ENCODE measurements at regions of chr9 and their contacts with region 1.

Region 1: GRCh38 chr9:69056191-69056815 is 20.8 kb downstream of the FXN start:
- DNase-seq: no peak
- H3K4me3 ChIP-seq: no peak overlapping the region
- H3K27ac ChIP-seq: no peak overlapping the region
- H3K27me3 ChIP-seq: no peaks in the 10 kb centered on the region
- CTCF ChIP-seq: no peak

Region 2: DNA sequence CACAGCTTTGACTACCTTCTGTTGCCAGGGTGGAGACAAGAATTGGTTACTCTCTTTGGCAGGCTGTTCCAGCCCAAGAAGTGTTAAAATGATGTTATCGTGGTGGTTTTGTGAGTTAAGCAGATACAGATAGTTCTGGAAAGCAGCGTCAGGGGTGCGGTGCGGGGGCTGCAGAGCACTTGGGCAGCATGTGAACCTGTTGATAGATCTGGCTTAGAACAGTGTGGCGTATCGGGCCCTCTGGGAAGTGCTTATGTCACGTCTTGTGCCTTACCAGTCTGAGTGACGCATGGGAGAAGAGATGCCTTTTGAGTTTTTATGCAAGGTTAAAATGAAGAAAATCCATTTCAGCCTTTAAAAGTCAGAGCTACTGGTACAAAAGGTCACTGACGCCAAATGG is 194.9 kb before region 1 on chr9:
- CTCF ChIA-PET with region 1: no interaction called
- POLR2A ChIA-PET with region 1: no interaction called
- DNase-seq: no peak
- H3K4me3 ChIP-seq: no peak overlapping the region
- H3K27ac ChIP-seq: no peak overlapping the region
- H3K27me3 ChIP-seq: peaks cover 6% of the 10 kb centered on the region
- CTCF ChIP-seq: no peak

Region 3: DNA sequence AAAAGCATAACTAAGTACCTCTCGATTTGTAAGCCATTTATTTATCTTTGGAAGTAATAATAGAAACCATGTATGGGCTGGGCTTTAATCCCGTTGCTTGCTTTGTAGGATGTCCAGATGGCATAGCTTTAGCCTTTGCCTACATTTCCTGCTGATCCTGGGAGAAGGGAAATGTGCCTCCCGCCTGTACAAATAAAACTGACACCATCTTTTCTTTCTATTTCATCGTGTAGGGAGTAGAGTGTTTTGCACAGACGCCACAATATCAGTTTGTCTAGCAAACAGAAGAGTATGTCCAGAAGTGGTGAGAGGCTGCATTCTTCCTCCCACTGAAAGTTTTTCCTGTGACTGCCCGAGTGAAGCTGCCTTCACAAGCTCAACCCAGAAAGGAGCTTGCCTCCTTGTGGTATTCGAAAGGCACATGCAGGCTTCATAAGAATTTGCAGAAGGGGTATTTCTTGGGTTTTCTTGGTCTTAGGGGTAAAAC is 93.1 kb after region 1 on chr9:
- CTCF ChIA-PET with region 1: interaction called, 23 read pairs
- POLR2A ChIA-PET with region 1: no interaction called
- DNase-seq: peak; percentile 65
- H3K4me3 ChIP-seq: peak overlapping the region; percentile 45
- H3K27ac ChIP-seq: peak overlapping the region; percentile 68
- H3K27me3 ChIP-seq: no peaks in the 10 kb centered on the region
- CTCF ChIP-seq: peak; percentile 69

Region 4: GRCh38 chr9:69155341-69156030 is 99.2 kb after region 1 on chr9:
- CTCF ChIA-PET with region 1: interaction called, 15 read pairs
- POLR2A ChIA-PET with region 1: no interaction called
- DNase-seq: no peak
- H3K4me3 ChIP-seq: no peak overlapping the region
- H3K27ac ChIP-seq: no peak overlapping the region
- H3K27me3 ChIP-seq: no peaks in the 10 kb centered on the region
- CTCF ChIP-seq: no peak

Region 5: GRCh38 chr9:69180670-69181069 is 124.4 kb after region 1 on chr9:
- CTCF ChIA-PET with region 1: interaction called, 10 read pairs
- POLR2A ChIA-PET with region 1: interaction called, 6 read pairs
- DNase-seq: peak; percentile 92
- H3K4me3 ChIP-seq: no peak overlapping the region
- H3K27ac ChIP-seq: peak overlapping the region; percentile 70
- H3K27me3 ChIP-seq: no peaks in the 10 kb centered on the region
- CTCF ChIP-seq: no peak

Region 6: DNA sequence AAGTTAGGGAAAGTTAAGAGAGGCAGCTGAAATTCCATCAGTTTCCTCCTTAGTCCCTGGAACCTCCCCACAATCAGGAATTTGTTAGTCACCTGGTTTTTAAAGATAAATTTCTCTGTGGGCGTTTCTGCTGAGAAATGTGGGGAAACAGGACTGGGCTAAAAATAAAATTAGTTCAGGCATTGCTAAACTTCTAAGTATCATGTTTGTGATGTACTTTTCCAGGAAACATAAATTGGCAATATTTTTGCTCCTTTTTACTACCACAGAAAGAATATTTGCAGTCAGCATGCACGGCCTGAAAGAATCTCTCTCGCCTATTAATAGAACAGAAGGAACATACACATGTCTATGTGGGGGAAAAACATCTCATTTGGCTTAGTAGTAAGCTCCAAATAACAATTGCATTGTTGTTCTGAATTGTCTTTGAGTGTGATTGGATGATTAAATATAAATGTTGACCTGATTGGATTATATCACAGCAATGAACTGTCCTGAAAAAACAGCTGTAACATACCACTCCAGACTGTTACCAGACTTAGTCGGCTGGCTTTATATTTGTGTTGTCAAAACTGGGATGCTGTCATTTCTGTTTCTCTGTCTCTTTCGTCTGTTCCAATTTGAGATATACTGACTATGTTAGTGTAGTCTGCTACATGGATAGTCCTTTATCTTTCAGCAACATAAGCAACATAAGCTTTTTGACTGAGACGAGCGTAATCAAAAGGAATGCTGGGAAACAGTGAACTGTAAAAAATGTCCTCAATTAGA is 130.7 kb after region 1 on chr9:
- CTCF ChIA-PET with region 1: interaction called, 324 read pairs
- POLR2A ChIA-PET with region 1: interaction called, 4 read pairs
- DNase-seq: no peak
- H3K4me3 ChIP-seq: no peak overlapping the region
- H3K27ac ChIP-seq: no peak overlapping the region
- H3K27me3 ChIP-seq: no peaks in the 10 kb centered on the region
- CTCF ChIP-seq: no peak

Region 7: DNA sequence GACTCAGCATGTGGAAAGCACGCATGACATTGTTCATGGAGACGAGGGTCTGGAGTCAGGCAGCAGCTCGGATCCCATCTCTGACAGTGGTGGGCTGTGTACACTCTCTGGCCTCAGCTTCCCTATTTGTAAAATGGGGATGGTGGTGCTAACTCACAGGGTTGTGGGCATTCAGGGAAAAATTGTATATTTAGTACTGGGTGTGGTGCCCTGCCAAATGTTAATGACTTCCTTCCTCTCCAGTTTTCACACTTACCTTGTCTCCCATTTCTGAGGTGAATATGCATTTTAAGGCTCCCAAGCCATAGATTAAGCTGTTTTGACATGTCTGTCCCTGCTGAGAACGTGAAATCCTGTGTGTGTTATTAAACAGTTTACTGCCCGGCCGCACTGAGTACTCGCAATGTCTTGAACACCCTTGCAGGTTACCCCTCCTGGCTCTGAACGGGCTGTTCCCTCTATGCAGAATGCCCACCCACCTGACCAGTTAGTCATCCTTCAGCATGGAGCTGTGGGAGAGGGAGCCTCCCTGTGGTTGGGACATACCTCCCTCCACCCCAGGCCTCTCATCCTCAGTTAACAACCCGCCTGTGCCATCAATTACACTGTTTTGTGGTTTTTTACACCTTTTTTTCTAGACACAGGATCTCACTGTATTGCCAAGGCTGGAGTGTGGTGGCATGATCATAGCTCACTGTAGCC is 143.6 kb after region 1 on chr9:
- CTCF ChIA-PET with region 1: interaction called, 324 read pairs
- POLR2A ChIA-PET with region 1: no interaction called
- DNase-seq: no peak
- H3K4me3 ChIP-seq: no peak overlapping the region
- H3K27ac ChIP-seq: no peak overlapping the region
- H3K27me3 ChIP-seq: no peaks in the 10 kb centered on the region
- CTCF ChIP-seq: no peak

Region 8: DNA sequence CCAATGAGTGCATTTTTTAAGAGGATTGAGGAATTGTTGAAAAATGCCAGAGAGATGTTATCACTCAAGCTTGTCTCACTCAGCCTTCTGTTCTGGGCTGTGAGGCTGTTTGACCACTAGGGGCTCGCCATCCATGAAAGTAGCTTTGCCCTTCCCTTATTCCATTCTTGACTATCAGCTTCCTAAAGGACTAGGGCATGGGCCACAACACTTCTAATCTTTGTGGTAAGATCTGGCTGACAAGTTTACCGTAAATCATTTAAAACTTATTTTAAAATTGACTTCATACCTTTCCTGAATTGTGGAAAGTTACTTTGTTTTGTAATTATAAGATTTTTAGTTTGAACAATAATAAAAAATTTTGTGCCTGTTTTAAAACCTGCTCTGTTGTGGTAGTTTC is 167.3 kb after region 1 on chr9:
- CTCF ChIA-PET with region 1: interaction called, 20 read pairs
- POLR2A ChIA-PET with region 1: no interaction called
- DNase-seq: peak; percentile 50
- H3K4me3 ChIP-seq: no peak overlapping the region
- H3K27ac ChIP-seq: no peak overlapping the region
- H3K27me3 ChIP-seq: no peaks in the 10 kb centered on the region
- CTCF ChIP-seq: peak; percentile 87

Region 9: DNA sequence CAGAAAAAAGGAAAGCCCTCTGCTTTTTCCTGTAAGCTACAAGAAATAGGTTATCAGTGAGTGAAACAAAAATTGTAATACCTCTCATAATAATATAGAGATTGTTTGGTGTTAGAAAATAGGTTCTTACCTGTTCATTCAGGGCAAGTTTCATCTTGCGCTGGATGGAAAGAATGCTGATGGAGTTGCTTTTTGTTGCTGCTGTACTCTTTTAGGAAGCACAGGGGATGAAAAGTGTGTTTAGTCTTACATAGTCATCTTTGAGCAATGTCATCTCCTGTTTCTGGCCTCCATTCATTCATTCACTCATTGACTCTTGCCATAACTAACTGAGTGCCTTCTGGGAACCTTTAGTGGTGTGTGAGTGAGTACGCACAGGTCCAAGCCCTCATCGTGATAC is 275.1 kb after region 1 on chr9:
- CTCF ChIA-PET with region 1: no interaction called
- POLR2A ChIA-PET with region 1: no interaction called
- DNase-seq: no peak
- H3K4me3 ChIP-seq: no peak overlapping the region
- H3K27ac ChIP-seq: no peak overlapping the region
- H3K27me3 ChIP-seq: peaks cover 29% of the 10 kb centered on the region
- CTCF ChIP-seq: no peak